ENCODE measurements at regions of chr7 and their contacts with region 1.

Region 1: GRCh38 chr7:44638611-44639557 is 32.5 kb downstream of the OGDH start:
- DNase-seq: peak; percentile 69
- ATAC-seq: peak; percentile 82
- H3K4me3 Mint-ChIP-seq: peak overlapping the region; percentile 84
- H3K27ac Mint-ChIP-seq: peak overlapping the region; percentile 97
- H3K4me1 Mint-ChIP-seq: peaks cover 64% of the 10 kb centered on the region
- H3K27me3 Mint-ChIP-seq: no peaks in the 10 kb centered on the region
- CTCF ChIP-seq: no peak

Region 2: DNA sequence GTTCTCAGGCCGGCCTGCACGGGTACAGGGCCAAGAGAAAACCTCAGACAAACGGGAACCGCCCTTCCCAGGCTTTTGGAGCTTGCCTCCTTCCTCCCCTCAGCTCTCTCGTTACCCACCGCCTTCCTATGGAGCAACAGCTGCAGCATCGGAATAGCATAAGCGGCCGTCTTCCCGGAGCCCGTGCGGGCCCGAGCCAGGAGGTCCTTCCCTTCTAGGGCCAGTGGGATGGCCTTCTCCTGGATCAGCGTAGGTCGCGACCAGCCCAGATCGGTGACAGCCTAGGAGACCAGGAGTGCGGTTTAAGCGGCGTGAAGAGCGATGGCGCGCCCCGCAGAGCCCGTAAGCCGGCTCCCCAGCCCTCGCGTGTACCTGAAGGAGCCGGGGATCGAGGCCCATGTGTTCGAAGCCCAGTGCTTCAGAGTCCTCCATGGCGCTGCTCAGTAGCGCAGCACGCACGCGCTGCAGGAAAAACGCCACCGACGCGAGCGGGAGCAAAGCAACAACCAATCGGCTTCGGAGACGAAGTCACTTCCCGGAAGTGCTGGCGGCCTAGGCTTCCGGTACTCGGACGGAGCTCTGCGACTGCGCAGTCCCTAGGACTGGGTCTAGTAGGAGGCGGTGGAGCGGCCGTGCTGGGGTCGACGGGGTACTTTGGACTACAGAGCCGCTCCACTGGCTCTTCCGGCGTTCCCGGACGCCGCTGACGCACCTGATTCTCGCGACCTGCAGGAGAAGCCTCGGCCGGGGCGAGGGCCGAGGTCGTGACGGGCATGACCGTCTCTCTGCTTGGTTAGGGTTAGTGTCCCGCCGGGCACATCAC is 65.2 kb before region 1 on chr7 and contains the start of gene DDX56:
- CTCF ChIA-PET with region 1: no interaction called
- POLR2A ChIA-PET with region 1: interaction called, 12 read pairs
- intact Hi-C with region 1: no loop called
- DNase-seq: peak; percentile 82
- ATAC-seq: peak; percentile 97
- H3K4me3 Mint-ChIP-seq: peak within 1 kb of the TSS; percentile 94
- H3K27ac Mint-ChIP-seq: peak within 1 kb of the TSS; percentile 94
- H3K4me1 Mint-ChIP-seq: peaks cover 35% of the 10 kb centered on the region
- H3K27me3 Mint-ChIP-seq: no peaks in the 10 kb centered on the region
- CTCF ChIP-seq: no peak
- total RNA-seq, gene DDX56: 92.6 and 99.7 TPM in 2 replicates

Region 3: DNA sequence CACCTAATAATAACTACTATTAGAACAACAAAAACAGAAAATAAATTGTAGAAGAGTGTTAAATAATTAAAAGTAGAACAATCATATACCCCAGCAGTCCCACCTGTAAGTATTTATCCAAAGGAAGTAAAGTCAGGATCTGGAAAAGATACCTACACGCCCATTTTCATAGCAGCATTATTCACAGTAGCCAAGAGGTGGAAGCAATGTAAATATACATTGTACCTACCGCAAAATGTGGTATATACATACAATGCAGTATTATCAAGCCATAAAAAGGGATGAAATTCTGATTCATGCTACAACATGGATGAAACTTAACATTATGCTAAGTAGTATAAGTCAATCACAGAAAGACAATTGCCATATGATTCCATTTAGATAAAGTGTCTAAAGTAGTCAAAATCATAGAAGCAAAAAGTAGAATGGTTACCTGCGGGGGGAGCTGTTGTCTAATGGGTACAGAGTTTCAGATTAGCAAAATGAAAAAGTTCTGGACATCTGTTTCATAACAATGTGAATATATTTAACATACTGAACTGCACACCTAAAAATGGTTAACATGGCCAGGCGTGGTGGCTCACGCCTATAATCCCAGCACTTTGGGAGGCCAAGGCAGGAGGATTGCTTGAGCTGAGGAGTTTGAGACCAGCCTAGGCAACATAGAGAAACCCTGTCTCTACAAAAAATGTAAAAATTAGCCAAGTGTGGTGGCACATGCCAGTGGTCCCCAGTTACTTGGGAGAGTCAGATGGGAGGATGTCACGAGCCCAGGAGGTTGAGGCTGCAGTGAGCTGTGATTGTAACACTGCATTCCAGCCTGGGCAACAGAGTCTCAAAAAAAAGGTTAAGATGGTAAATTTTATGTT is 50.8 kb before region 1 on chr7:
- CTCF ChIA-PET with region 1: no interaction called
- POLR2A ChIA-PET with region 1: interaction called, 34 read pairs
- intact Hi-C with region 1: loop called (anchors 1 kb)
- DNase-seq: no peak
- ATAC-seq: peak; percentile 79
- H3K4me3 Mint-ChIP-seq: no peak overlapping the region
- H3K27ac Mint-ChIP-seq: no peak overlapping the region
- H3K4me1 Mint-ChIP-seq: peaks cover 6% of the 10 kb centered on the region
- H3K27me3 Mint-ChIP-seq: peaks cover 3% of the 10 kb centered on the region
- CTCF ChIP-seq: no peak

Region 4: GRCh38 chr7:44622307-44623151 is 16.4 kb before region 1 on chr7:
- CTCF ChIA-PET with region 1: interaction called, 3 read pairs
- POLR2A ChIA-PET with region 1: interaction called, 9 read pairs
- intact Hi-C with region 1: loop called (anchors 2 kb)
- DNase-seq: no peak
- ATAC-seq: peak; percentile 71
- H3K4me3 Mint-ChIP-seq: peak overlapping the region; percentile 28
- H3K27ac Mint-ChIP-seq: peak overlapping the region; percentile 74
- H3K4me1 Mint-ChIP-seq: peaks cover 63% of the 10 kb centered on the region
- H3K27me3 Mint-ChIP-seq: no peaks in the 10 kb centered on the region
- CTCF ChIP-seq: no peak

Region 5: GRCh38 chr7:44769776-44770662 is 131.1 kb after region 1 on chr7:
- CTCF ChIA-PET with region 1: interaction called, 7 read pairs
- POLR2A ChIA-PET with region 1: interaction called, 20 read pairs
- intact Hi-C with region 1: no loop called
- DNase-seq: no peak
- ATAC-seq: peak; percentile 10
- H3K4me3 Mint-ChIP-seq: peak overlapping the region; percentile 58
- H3K27ac Mint-ChIP-seq: peak overlapping the region; percentile 88
- H3K4me1 Mint-ChIP-seq: peaks cover 60% of the 10 kb centered on the region
- H3K27me3 Mint-ChIP-seq: no peaks in the 10 kb centered on the region
- CTCF ChIP-seq: no peak

Region 6: GRCh38 chr7:44980393-44981034 is 341.6 kb after region 1 on chr7:
- CTCF ChIA-PET with region 1: no interaction called
- POLR2A ChIA-PET with region 1: interaction called, 3 read pairs
- intact Hi-C with region 1: loop called (anchors 5 kb)
- DNase-seq: peak; percentile 56
- ATAC-seq: peak; percentile 63
- H3K4me3 Mint-ChIP-seq: peak overlapping the region; percentile 74
- H3K27ac Mint-ChIP-seq: peak overlapping the region; percentile 92
- H3K4me1 Mint-ChIP-seq: peaks cover 86% of the 10 kb centered on the region
- H3K27me3 Mint-ChIP-seq: no peaks in the 10 kb centered on the region
- CTCF ChIP-seq: no peak

Measured in activated B cell treated with CpG ODN at 0.5 μM for 24 hours (primary cell).